ENCODE measurements at regions of chr19 and their contacts with region 1.

Region 1: GRCh38 chr19:29844891-29845572 is 33.2 kb downstream of the CCNE1 start:
- DNase-seq: peak; percentile 98
- ATAC-seq: peak; percentile 80
- H3K4me3 Mint-ChIP-seq: peak overlapping the region; percentile 89
- H3K27ac Mint-ChIP-seq: peak overlapping the region; percentile 90
- H3K4me1 Mint-ChIP-seq: peaks cover 9% of the 10 kb centered on the region
- H3K27me3 Mint-ChIP-seq: no peaks in the 10 kb centered on the region

Region 2: DNA sequence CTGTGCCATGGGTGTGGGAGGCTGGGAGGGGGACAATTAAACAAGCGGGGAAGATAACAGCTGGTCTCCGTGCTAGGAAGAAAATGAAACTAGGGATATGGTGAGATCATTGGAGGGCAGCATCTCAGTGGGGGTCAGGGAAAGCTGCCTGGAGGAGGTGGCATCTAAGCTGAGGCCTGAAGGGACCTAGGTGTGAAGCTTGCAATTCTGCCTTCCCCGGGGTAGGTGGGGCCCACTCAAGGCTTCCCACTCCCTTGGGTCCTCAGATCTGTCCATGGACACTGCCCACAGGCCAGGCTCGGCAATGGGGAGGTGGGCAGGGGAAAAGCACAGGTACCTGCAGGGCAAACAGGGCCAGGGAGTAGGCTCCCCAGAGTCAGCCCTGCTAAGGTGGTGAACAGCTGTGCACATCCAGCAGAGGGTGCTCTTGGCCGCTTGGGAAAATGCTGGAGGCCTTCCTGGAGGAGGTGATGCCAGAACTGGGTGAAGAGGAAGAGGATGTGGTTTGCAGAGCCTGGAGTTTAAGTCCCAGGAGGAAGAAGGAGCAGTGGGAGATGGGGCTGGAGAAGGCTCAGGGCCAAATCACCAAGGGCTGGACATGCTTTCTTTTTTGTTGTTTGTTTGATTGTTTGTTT is 59.0 kb before region 1 on chr19:
- POLR2A ChIA-PET with region 1: no interaction called
- DNase-seq: no peak
- ATAC-seq: no peak
- H3K4me3 Mint-ChIP-seq: no peak overlapping the region
- H3K27ac Mint-ChIP-seq: no peak overlapping the region
- H3K4me1 Mint-ChIP-seq: no peaks in the 10 kb centered on the region
- H3K27me3 Mint-ChIP-seq: no peaks in the 10 kb centered on the region

Region 3: DNA sequence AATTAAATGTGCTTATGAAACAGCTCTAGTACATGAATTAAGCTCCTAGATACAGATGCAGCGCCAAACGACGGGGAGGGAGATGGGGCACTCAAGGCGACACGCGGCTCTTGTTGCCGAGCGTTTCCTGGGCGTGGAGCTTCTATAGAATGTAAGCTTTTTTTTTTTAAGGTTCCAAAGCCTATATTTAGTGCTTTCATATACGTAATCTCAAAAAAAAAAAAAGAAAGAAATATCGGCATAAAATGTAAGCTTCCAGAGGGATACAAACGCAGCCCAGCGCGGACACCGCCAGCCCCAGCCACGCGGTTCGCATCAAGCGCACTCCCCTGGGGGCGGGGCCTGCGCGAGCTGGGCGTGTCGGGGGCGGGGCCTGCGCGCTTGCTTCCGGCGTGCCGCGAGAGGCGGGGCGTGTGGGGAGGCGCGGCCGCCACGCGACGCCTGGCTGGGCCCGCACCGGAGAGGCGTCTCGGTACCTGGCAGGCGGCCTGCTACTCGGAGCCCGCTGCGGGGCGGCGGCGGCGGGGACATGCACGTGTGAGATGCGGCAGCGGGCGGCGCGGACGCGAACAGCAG is 96.9 kb after region 1 on chr19 and contains the start of gene URI1:
- POLR2A ChIA-PET with region 1: interaction called, 11 read pairs
- DNase-seq: peak; percentile 100
- ATAC-seq: peak; percentile 81
- H3K4me3 Mint-ChIP-seq: peak within 1 kb of the TSS; percentile 98
- H3K27ac Mint-ChIP-seq: peak within 1 kb of the TSS; percentile 93
- H3K4me1 Mint-ChIP-seq: peaks cover 36% of the 10 kb centered on the region
- H3K27me3 Mint-ChIP-seq: peaks cover 2% of the 10 kb centered on the region
- total RNA-seq, gene URI1: 66.1 to 67.0 TPM